ENCODE measurements at regions of chr12 and their contacts with region 1.

Region 1: DNA sequence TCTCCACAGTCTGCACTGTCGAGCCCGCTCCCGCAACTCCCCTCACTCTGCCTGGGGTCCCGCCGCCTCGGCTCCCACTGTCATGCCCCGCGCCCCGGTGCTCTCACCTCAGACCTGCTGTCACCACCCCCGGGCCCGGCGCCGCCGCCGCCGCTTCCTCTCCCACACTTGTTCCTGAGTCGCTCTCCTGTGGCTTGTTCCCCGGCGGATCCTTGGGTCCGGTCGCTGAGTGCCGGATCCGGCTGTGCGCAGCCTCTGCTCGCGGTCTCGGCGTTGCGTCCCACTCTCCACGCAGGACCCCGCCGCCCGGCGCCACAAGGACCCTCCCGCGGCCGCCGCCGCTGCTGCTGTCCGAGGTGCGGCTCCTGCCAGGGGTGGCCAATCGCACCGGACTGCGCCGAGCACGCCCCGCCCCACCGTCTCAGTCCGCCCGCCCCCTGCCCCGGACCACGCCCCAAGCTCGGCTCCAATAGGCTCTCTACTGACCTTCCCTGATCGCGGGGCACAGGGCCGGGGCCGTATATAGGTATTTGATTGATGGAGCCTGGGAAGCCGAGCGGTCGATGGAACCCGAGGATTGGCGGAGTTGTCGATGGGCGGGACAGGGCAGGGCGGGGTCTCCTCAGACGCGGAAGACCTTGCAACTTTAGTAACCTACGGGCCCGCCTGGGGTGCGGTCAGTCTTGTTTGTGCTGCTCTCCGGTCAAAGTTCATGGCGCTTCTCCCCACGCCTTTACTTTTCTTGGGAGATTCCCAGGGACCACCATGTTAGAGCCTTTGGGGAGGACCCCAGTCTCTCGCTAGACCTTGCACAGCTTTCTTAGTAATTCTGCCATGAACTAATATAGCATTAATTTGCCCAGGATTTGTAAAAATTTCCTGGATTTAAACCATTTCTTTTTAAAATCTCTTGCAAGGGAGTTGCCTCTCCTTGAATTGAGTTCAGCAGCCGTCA is at the start of gene TAOK3:
- DNase-seq: peak; percentile 98 to 99
- ATAC-seq: peak; percentile 94 to 97 (median 96)
- H3K4me3 ChIP-seq: peak within 1 kb of the TSS; percentile 56 to 98 (median 94)
- H3K27ac ChIP-seq: peak within 1 kb of the TSS; percentile 65 to 100 (median 96)
- H3K4me1 ChIP-seq: peaks cover 0 to 65% (median 43%) of the 10 kb centered on the region in 9 donors
- H3K27me3 ChIP-seq: no peaks in the 10 kb centered on the region
- CTCF ChIP-seq: peak in 1 of 9 donors; percentile 14
- total RNA-seq, gene TAOK3: 13.2 to 29.8 (median 21.5) TPM

Region 2: DNA sequence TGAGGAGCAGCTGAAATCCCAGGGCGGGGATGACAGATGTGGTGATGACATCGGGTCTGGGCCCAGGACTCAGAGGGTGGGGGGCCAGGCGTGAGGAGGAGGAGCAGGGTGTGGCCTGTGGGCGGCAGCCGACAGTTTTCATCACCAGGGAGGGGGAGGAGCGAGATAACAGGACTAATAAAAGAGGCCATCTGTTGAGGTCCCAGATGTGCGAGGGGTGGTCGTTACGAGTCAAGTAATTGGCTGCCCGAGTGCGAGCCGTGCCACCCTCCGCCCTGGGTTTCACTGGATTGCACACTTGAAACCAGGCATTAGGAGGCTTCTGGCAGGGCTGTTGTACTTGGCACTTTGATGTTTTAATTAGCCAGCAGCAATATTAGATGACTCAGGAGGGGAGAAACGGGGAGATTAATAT is 1078.6 kb before region 1 on chr12:
- intact Hi-C with region 1: no loop called
- DNase-seq: no peak
- ATAC-seq: no peak
- H3K4me3 ChIP-seq: no peak overlapping the region
- H3K27ac ChIP-seq: no peak overlapping the region
- H3K4me1 ChIP-seq: no peaks in the 10 kb centered on the region
- H3K27me3 ChIP-seq: peaks cover 0 to 35% (median 26%) of the 10 kb centered on the region in 7 donors
- CTCF ChIP-seq: no peak

Region 3: GRCh38 chr12:117874842-117875434 is 497.9 kb before region 1 on chr12:
- intact Hi-C with region 1: loop called in 4 of 10 experiments (anchors 5 to 10 kb)
- DNase-seq: peak; percentile 60 to 68
- ATAC-seq: peak; percentile 75 to 84 (median 80)
- H3K4me3 ChIP-seq: no peak overlapping the region
- H3K27ac ChIP-seq: no peak overlapping the region
- H3K4me1 ChIP-seq: peaks cover 0 to 9% (median 0%) of the 10 kb centered on the region in 9 donors
- H3K27me3 ChIP-seq: peaks cover 0 to 38% (median 29%) of the 10 kb centered on the region in 7 donors
- CTCF ChIP-seq: peak; percentile 77 to 90 (median 87)

Region 4: GRCh38 chr12:118061011-118061875 is 311.6 kb before region 1 on chr12 and contains the start of gene WSB2:
- intact Hi-C with region 1: loop called in 2 of 10 experiments (anchors 5 to 10 kb)
- DNase-seq: peak; percentile 84 to 91
- ATAC-seq: peak; percentile 58 to 80 (median 76)
- H3K4me3 ChIP-seq: peak within 1 kb of the TSS; percentile 71 to 94 (median 84)
- H3K27ac ChIP-seq: peak within 1 kb of the TSS; percentile 93 to 99 (median 98)
- H3K4me1 ChIP-seq: peaks cover 0 to 70% (median 35%) of the 10 kb centered on the region in 9 donors
- H3K27me3 ChIP-seq: no peaks in the 10 kb centered on the region
- CTCF ChIP-seq: no peak
- total RNA-seq, gene WSB2: 89.8 to 125 (median 98.2) TPM

Region 5: GRCh38 chr12:118183705-118184104 is 189.1 kb before region 1 on chr12:
- intact Hi-C with region 1: loop called (anchors 1 to 10 kb)
- DNase-seq: no peak
- ATAC-seq: peak in 1 of 8 donors; percentile 19
- H3K4me3 ChIP-seq: no peak overlapping the region
- H3K27ac ChIP-seq: peak overlapping the region in 8 of 10 donors; percentile 3 to 47 (median 14)
- H3K4me1 ChIP-seq: peaks cover 0 to 60% (median 38%) of the 10 kb centered on the region in 9 donors
- H3K27me3 ChIP-seq: no peaks in the 10 kb centered on the region
- CTCF ChIP-seq: no peak

Region 6: DNA sequence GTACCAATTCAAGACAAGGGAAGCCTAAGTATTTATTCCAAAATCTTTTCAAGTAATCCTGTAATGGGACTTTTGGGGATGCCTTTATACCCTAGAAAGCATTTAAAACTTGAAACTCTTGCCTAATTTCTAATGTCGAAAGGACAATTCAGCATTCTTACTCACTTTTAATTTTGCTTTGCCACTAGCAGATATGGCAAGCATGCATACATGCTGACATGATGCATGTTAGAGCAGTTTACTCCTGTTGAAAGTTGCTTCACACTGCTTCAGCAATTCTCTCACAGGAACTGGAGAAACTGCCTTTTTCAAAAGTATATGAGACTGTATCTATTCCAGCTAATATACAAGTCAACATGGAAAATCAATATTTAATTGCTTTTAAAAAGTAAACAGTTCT is 80.0 kb before region 1 on chr12:
- intact Hi-C with region 1: no loop called
- DNase-seq: no peak
- ATAC-seq: no peak
- H3K4me3 ChIP-seq: no peak overlapping the region
- H3K27ac ChIP-seq: no peak overlapping the region
- H3K4me1 ChIP-seq: peaks cover 0 to 17% (median 0%) of the 10 kb centered on the region in 9 donors
- H3K27me3 ChIP-seq: no peaks in the 10 kb centered on the region
- CTCF ChIP-seq: no peak

Region 7: GRCh38 chr12:118307069-118307954 is 65.5 kb before region 1 on chr12:
- intact Hi-C with region 1: loop called in 4 of 10 experiments (anchors 5 to 10 kb)
- DNase-seq: peak in 1 of 2 donors; percentile 53
- ATAC-seq: peak in 7 of 8 donors; percentile 46 to 80 (median 72)
- H3K4me3 ChIP-seq: peak overlapping the region in 6 of 10 donors; percentile 15 to 31 (median 22)
- H3K27ac ChIP-seq: peak overlapping the region in 4 of 10 donors; percentile 10 to 73 (median 29)
- H3K4me1 ChIP-seq: peaks cover 0 to 41% (median 15%) of the 10 kb centered on the region in 9 donors
- H3K27me3 ChIP-seq: no peaks in the 10 kb centered on the region
- CTCF ChIP-seq: no peak